OCI-LY7 (cell line): ENCODE measurements at regions of chr12 and their contacts with region 1.

Region 1: DNA sequence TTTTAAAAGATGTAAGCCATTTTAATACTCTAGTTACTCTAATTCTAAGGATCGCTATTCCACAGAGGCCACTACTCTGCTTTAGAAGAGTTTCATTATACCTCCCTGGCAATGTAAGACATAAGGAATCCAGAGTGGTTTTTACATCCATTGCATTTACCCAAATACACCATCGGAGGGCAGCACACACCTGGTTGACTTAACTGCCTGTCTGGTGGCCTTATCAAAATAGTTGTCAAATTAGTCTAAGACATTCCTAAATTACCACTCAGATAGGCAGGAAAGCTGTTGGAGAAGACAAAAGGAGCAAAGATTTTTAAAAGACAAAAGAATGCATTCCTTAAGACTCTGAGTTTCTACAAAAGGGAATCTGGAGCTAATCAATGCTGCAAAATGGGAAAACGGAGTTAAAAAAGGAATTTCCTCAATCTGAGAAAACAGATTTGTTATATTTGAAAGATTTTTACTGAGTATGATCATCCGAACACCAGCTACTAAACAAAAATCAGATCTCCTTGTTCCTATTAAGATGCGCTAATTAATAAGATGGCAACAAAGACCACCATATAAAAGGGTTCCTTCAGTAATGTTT is 33.8 kb upstream of the FGD4 start:
- DNase-seq: peak; percentile 74
- H3K4me3 ChIP-seq: no peak overlapping the region
- H3K27ac ChIP-seq: no peak overlapping the region
- H3K4me1 ChIP-seq: no peaks in the 10 kb centered on the region
- CTCF ChIP-seq: peak; percentile 98

Region 2: GRCh38 chr12:31650927-31651326 is 714.6 kb before region 1 on chr12:
- CTCF ChIA-PET with region 1: no interaction called
- POLR2A ChIA-PET with region 1: no interaction called
- intact Hi-C with region 1: loop called (anchors 5 kb)
- DNase-seq: no peak
- H3K4me3 ChIP-seq: no peak overlapping the region
- H3K27ac ChIP-seq: no peak overlapping the region
- H3K4me1 ChIP-seq: peaks cover 16% of the 10 kb centered on the region
- CTCF ChIP-seq: no peak

Region 3: GRCh38 chr12:32444895-32445294 is 79.3 kb after region 1 on chr12:
- CTCF ChIA-PET with region 1: no interaction called
- POLR2A ChIA-PET with region 1: no interaction called
- intact Hi-C with region 1: loop called (anchors 5 kb)
- DNase-seq: no peak
- H3K4me3 ChIP-seq: no peak overlapping the region
- H3K27ac ChIP-seq: no peak overlapping the region
- H3K4me1 ChIP-seq: peaks cover 16% of the 10 kb centered on the region
- CTCF ChIP-seq: no peak

Region 4: GRCh38 chr12:32541851-32542258 is 176.3 kb after region 1 on chr12:
- CTCF ChIA-PET with region 1: no interaction called
- POLR2A ChIA-PET with region 1: no interaction called
- intact Hi-C with region 1: no loop called
- DNase-seq: no peak
- H3K4me3 ChIP-seq: no peak overlapping the region
- H3K27ac ChIP-seq: no peak overlapping the region
- H3K4me1 ChIP-seq: peaks cover 65% of the 10 kb centered on the region
- CTCF ChIP-seq: no peak

Region 5: GRCh38 chr12:32671930-32672780 is 306.6 kb after region 1 on chr12:
- CTCF ChIA-PET with region 1: no interaction called
- POLR2A ChIA-PET with region 1: interaction called, 3 read pairs
- intact Hi-C with region 1: loop called (anchors 1 kb)
- DNase-seq: peak; percentile 89
- H3K4me3 ChIP-seq: no peak overlapping the region
- H3K27ac ChIP-seq: peak overlapping the region; percentile 20
- H3K4me1 ChIP-seq: peaks cover 23% of the 10 kb centered on the region
- CTCF ChIP-seq: peak; percentile 88